SK-N-SH (cell line): ENCODE measurements at regions of chr11 and their contacts with region 1.

Region 1: GRCh38 chr11:65418711-65419459 is 3.7 kb upstream of the NEAT1 start:
- DNase-seq: peak; percentile 91
- H3K4me3 ChIP-seq: peak overlapping the region; percentile 13 to 18; a peak in 3 of 4 replicates
- H3K27ac ChIP-seq: peak overlapping the region; percentile 100
- H3K4me1 ChIP-seq: peaks cover 50 to 61% of the 10 kb centered on the region in 2 experiments
- H3K27me3 ChIP-seq: no peaks in the 10 kb centered on the region
- CTCF ChIP-seq: no peak
- EP300 ChIP-seq: peak; percentile 36 to 65; a peak in 3 of 4 replicates
- RAD21 ChIP-seq: no peak

Region 2: DNA sequence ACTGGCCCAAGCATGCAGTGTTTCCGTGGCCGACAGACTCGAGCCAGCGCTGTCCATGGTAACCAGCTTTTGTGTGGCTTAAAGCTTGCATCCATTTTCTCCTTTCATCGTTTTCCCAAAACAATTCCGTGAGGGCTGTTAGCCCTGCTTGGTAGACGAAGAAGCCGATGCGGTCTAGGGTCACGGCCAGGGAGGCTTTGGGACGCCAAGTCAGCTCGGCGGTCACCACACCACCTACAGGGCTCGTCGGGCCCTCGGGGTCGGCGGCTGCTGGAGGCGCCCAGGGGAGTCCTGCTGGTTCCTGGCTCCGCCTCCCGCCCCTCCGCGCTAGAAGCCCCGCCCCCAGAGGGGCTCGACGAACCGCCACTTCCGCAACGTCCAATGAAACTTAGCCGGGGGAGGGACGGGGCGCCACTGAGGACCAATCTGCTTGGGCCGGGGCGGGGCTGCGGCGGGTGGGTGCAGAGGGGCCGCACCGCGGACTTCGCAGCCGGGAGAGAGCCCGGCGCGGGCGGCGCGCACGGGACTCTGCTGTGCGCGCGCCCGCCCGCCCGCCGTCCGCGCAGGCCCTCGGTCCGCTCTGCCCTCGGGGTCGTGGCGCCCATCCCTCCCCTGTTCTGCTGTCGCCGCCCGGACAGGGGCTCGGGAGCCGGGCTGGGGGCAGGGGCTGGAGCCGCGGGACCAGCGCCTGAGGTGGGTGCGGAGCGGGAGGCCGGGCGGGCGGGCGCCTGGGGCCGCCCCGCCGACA is 64.4 kb before region 1 on chr11 and contains the start of gene TIGD3:
- CTCF ChIA-PET with region 1: interaction called, 9 read pairs
- POLR2A ChIA-PET with region 1: interaction called, 13 read pairs
- DNase-seq: peak; percentile 99
- H3K4me3 ChIP-seq: peak within 1 kb of the TSS; percentile 71 to 74
- H3K27ac ChIP-seq: peak within 1 kb of the TSS; percentile 34 to 83
- H3K4me1 ChIP-seq: peaks cover 0 to 20% of the 10 kb centered on the region in 2 experiments; a peak in 1 of 4 replicates
- H3K27me3 ChIP-seq: no peaks in the 10 kb centered on the region
- CTCF ChIP-seq: 0 out of 2 replicates have a peak, but pooled peaks have one; percentile 13
- EP300 ChIP-seq: no peak
- RAD21 ChIP-seq: no peak
- polyA plus RNA-seq, gene TIGD3: 0.34 and 0.41 TPM in 2 replicates

Region 3: DNA sequence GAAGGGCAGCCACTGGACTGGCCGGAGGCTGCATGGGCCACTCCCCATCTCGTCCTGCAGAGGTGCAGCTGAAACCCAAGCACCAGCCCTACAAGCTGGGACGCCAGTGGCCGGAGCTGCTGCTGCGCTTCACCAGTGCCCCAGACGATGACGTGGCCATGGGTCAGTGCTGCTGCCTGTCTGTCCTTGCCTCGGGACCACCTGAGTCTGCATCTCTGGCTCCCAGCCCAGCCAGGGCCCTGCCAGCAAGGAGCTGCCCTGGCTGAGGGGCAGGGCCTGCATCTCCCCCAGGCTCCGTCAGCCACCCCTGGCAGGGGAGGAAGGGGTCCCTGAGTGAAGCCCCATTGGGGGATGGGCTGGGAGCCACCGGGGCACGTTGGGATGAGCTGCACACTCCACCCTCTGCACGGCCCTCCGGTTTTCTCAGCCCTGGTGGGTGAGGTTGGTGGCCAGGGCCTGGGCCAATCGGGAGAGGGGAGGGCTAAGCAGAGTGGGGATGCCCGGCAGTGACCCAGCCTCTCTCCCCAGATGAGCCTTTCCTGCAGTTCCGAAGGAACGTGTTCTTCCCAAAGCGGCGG is 25.3 kb before region 1 on chr11:
- CTCF ChIA-PET with region 1: interaction called, 47 read pairs
- POLR2A ChIA-PET with region 1: interaction called, 21 read pairs
- DNase-seq: no peak
- H3K4me3 ChIP-seq: no peak overlapping the region
- H3K27ac ChIP-seq: no peak overlapping the region
- H3K4me1 ChIP-seq: peaks cover 20 to 30% of the 10 kb centered on the region in 2 experiments; a peak in 2 of 4 replicates
- H3K27me3 ChIP-seq: no peaks in the 10 kb centered on the region
- CTCF ChIP-seq: no peak
- EP300 ChIP-seq: no peak
- RAD21 ChIP-seq: no peak

Region 4: DNA sequence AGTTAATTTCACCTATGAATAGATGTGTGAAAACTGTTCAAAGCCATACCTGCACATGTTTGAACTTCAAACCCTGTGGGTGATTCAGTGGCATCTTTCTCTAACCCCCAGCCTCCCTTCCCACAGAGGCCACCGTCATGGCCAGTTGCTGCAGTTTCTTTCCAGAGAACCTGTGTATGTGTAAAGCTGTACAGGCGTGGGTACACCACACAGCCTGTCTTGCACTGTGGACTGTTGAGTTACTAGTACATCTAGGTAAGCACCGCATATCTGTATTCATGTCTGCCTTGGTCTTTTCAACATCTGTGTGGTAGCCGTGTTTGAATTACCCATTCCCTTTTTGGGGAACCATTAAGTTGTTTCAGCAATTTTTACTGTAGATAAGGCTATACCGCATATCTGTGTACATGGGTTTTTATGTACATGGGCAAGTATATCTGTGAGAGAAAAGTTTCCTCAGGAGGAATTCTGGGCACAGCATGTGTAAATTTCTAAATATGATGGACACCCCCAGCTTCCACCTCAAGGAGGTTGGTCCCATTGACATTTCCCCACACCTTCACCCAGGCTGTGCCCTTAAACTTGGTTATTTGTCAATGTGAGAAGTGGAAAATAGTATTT is 17.6 kb after region 1 on chr11:
- CTCF ChIA-PET with region 1: interaction called, 9 read pairs
- POLR2A ChIA-PET with region 1: interaction called, 10 read pairs
- DNase-seq: no peak
- H3K4me3 ChIP-seq: peak overlapping the region; percentile 32 to 77; a peak in 3 of 4 replicates
- H3K27ac ChIP-seq: peak overlapping the region; percentile 43 to 100; a peak in 3 of 4 replicates
- H3K4me1 ChIP-seq: peaks cover 8 to 10% of the 10 kb centered on the region in 2 experiments; a peak in 3 of 4 replicates
- H3K27me3 ChIP-seq: no peaks in the 10 kb centered on the region
- CTCF ChIP-seq: no peak
- EP300 ChIP-seq: no peak
- RAD21 ChIP-seq: no peak

Region 5: DNA sequence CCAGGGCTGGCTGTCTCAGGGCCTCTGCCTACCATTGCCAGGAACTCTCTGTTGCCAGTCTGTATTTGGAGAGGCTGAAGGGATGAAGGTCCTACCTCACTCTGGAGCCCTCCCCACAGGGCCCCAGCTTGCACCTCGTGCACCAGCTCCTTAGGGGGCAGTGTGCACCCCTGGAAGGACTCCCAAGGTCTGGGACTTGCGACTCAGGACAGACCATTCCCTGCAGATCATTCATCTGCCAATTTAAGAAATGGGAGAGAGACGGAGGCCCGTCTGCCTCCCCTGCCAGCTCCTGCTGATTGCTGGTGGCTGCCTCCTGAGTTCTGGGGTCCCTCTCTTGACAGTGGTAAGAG is 52.5 kb after region 1 on chr11:
- CTCF ChIA-PET with region 1: interaction called, 54 read pairs
- POLR2A ChIA-PET with region 1: interaction called, 118 read pairs
- DNase-seq: peak; percentile 70
- H3K4me3 ChIP-seq: peak overlapping the region; percentile 12 to 47; a peak in 3 of 4 replicates
- H3K27ac ChIP-seq: peak overlapping the region; percentile 68 to 99
- H3K4me1 ChIP-seq: peaks cover 10 to 16% of the 10 kb centered on the region in 2 experiments; a peak in 3 of 4 replicates
- H3K27me3 ChIP-seq: no peaks in the 10 kb centered on the region
- CTCF ChIP-seq: peak; percentile 72
- EP300 ChIP-seq: no peak
- RAD21 ChIP-seq: peak; percentile 75

Region 6: GRCh38 chr11:65506770-65507505 is 88.1 kb after region 1 on chr11:
- CTCF ChIA-PET with region 1: interaction called, 223 read pairs
- POLR2A ChIA-PET with region 1: interaction called, 1,027 read pairs
- DNase-seq: no peak
- H3K4me3 ChIP-seq: peak overlapping the region; percentile 84 to 87
- H3K27ac ChIP-seq: peak overlapping the region; percentile 71 to 99
- H3K4me1 ChIP-seq: peaks cover 0 to 19% of the 10 kb centered on the region in 2 experiments; a peak in 2 of 4 replicates
- H3K27me3 ChIP-seq: no peaks in the 10 kb centered on the region
- CTCF ChIP-seq: no peak
- EP300 ChIP-seq: no peak
- RAD21 ChIP-seq: no peak

Region 7: GRCh38 chr11:65588199-65589054 is 169.5 kb after region 1 on chr11:
- CTCF ChIA-PET with region 1: no interaction called
- POLR2A ChIA-PET with region 1: no interaction called
- DNase-seq: peak; percentile 88
- H3K4me3 ChIP-seq: no peak overlapping the region
- H3K27ac ChIP-seq: no peak overlapping the region
- H3K4me1 ChIP-seq: peaks cover 0 to 13% of the 10 kb centered on the region in 2 experiments; a peak in 1 of 4 replicates
- H3K27me3 ChIP-seq: no peaks in the 10 kb centered on the region
- CTCF ChIP-seq: peak; percentile 58
- EP300 ChIP-seq: no peak
- RAD21 ChIP-seq: peak; percentile 60